Activated T-helper 2 cell treated with anti-CD3 and anti-CD28 coated beads, Interferon-gamma antibody, Interleukin-2, Interleukin-4, amounts not matched to agents 10 μg/mL and 5 μg/mL and 100 μg/mL, durations not matched to agents 14 hours and 24 hours and 36 hours (primary cell): ENCODE measurements at regions of chr10 and their contacts with region 1.

Region 1: DNA sequence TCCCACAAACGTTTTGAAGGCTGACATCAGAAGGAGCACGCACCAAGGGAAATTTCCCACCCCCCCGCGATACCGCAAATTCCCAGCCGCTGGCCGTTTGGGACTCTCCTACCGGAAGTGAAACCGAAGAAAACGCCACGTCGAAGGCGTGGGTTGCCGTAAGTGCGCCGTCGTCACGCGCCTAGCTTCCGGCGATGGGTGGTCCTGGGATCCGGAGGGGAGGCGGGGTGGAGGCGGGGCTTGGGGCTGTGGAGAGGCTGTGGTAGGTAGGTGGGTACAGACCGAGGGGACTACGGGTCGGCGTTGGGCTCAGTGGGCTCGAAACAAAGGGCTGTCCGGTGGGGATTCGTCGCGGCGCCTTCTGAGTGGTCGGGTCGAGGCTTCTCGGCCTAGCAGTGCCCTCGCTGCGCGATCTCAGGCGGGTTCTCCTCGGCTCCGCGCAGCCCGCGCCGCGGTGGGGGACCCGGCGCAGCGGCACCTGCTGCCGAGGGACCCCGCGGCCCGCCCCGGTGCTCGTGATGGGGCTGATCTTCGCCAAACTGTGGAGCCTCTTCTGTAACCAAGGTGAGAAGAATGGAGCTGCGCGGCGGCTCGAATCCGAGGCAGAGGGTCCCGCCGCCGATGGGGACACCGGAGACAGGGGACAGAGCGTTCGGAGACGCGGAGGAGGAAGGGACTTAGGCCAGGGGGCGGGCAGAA is at the start of gene ARL5B:
- DNase-seq: peak; percentile 92
- H3K4me3 Mint-ChIP-seq: peak within 1 kb of the TSS; percentile 94
- H3K27ac Mint-ChIP-seq: peak within 1 kb of the TSS; percentile 91
- H3K4me1 Mint-ChIP-seq: peaks cover 37% of the 10 kb centered on the region
- H3K27me3 Mint-ChIP-seq: no peaks in the 10 kb centered on the region
- total RNA-seq, gene ARL5B: 26.1 and 26.4 TPM in 2 replicates

Region 2: GRCh38 chr10:16817125-16818019 is 1841.9 kb before region 1 on chr10 and contains the start of gene RSU1:
- intact Hi-C with region 1: loop called (anchors 10 kb)
- DNase-seq: peak; percentile 100
- H3K4me3 Mint-ChIP-seq: peak within 1 kb of the TSS; percentile 93
- H3K27ac Mint-ChIP-seq: peak within 1 kb of the TSS; percentile 79
- H3K4me1 Mint-ChIP-seq: peaks cover 27% of the 10 kb centered on the region
- H3K27me3 Mint-ChIP-seq: peaks cover 10% of the 10 kb centered on the region
- total RNA-seq, gene RSU1: 49.1 and 54.0 TPM in 2 replicates

Region 3: DNA sequence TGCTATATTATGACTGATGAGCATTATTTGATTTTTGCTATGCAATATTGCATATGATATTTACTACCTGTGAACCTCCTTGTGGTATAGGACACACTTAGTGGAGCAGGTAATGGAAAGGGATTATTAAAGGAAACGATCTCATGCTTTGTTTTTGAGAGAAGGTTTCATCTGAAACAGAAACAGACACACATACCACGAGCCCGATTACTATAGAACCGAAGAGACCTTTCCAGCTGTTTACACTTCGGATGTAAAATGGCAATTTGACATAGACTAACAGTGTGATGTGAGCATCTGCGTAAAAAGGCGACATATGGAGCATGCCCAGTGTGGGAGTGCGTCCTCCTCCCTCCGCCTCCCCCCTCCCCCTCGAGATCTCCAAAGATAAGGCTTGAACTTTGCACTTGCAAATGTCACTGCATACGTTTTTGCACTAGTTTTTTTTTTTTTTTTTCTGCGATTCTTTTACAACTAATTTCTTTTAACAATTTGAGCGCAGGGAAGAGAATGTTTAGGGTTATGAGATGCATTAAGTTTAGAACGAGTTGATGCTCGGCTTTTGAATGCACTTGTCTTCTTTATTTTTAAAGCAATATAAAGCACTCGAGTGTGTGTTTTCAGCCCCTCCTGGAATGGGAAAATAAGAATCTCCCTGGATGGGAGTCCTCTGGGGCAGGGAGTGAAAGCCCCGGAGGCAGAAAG is 258.9 kb before region 1 on chr10:
- intact Hi-C with region 1: loop called (anchors 5 kb)
- DNase-seq: peak; percentile 18
- H3K4me3 Mint-ChIP-seq: peak overlapping the region; percentile 76
- H3K27ac Mint-ChIP-seq: peak overlapping the region; percentile 54
- H3K4me1 Mint-ChIP-seq: peaks cover 10% of the 10 kb centered on the region
- H3K27me3 Mint-ChIP-seq: peaks cover 25% of the 10 kb centered on the region

Region 4: DNA sequence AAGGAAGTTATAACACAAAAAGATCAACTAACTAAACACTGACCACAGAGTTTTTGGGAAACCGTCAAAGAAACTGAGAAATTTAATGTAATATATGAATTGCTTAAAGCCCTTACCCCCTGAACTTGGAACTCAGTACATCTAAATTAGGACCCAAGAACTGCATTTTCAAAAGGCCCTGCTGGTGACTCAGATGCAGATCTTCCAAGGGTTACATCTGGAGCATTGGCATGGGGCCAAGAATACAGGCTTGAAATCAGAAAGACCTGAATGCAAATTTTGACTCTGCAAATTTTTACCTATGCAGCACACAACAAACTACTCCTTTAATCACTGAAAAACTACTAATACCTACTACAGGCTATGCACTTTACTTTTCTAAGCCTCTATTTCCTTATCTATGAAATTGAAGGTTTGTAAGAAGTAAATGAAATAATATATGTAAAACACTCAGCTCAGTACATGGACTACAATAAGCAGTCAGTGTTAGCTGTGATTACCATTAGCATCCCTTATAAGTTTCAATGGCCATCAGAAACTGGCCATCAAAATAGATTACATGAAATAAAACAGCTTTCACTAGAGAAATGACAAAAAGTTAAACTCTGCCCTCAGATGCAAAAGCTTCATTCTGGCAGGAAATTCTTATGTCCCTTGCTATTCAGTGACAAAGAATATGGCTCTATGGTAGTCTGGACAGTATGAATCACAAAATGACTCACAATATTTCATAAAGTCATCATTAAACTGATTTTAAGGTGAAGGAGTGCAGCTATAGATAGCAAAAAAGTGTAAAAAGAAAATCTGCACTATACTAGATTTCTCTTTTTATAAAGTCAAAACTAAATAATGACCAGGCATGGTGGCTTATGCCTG is 51.5 kb before region 1 on chr10:
- intact Hi-C with region 1: loop called (anchors 2 kb)
- DNase-seq: no peak
- H3K4me3 Mint-ChIP-seq: no peak overlapping the region
- H3K27ac Mint-ChIP-seq: no peak overlapping the region
- H3K4me1 Mint-ChIP-seq: peaks cover 3% of the 10 kb centered on the region
- H3K27me3 Mint-ChIP-seq: no peaks in the 10 kb centered on the region

Region 5: DNA sequence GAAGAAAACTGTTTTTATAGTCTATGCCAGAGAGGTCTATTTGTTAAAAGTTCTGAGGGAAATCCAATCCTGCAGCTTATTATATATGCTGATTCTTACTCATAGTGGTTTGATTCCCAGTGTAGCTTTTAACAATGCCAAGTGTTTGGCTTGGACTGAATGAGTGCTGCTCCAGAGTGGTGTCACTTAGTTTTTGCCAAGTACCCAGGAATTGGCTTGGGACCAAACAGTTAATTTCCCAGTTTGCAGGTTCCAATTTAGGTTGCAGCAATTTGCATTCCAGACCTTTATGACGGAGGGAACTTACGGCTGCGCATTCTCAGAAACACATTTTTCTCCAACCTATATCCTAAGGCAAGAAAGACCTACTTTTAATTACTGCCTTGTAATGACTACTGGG is 40.3 kb before region 1 on chr10:
- intact Hi-C with region 1: loop called (anchors 5 kb)
- DNase-seq: no peak
- H3K4me3 Mint-ChIP-seq: no peak overlapping the region
- H3K27ac Mint-ChIP-seq: no peak overlapping the region
- H3K4me1 Mint-ChIP-seq: peaks cover 19% of the 10 kb centered on the region
- H3K27me3 Mint-ChIP-seq: no peaks in the 10 kb centered on the region

Region 6: DNA sequence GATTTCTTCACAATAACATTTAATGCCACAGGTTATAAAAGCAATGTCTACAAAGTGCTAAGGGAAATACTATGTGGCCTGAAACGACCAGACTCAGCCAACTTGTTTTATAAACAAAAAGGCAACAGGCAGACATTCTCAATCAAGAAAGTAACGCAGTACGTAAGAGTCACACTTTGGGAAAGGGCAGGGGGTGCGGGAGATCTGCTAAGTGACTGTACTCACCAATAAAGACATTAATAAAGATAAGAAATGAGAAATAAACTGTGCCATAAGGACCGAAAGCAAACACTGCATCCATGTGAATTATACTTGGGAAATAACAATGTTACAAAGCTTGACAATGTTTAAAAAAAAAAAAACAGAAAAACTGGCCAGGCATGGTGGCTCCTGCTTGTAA is 33.4 kb before region 1 on chr10:
- intact Hi-C with region 1: loop called (anchors 1 kb)
- DNase-seq: no peak
- H3K4me3 Mint-ChIP-seq: no peak overlapping the region
- H3K27ac Mint-ChIP-seq: no peak overlapping the region
- H3K4me1 Mint-ChIP-seq: peaks cover 16% of the 10 kb centered on the region
- H3K27me3 Mint-ChIP-seq: no peaks in the 10 kb centered on the region

Region 7: DNA sequence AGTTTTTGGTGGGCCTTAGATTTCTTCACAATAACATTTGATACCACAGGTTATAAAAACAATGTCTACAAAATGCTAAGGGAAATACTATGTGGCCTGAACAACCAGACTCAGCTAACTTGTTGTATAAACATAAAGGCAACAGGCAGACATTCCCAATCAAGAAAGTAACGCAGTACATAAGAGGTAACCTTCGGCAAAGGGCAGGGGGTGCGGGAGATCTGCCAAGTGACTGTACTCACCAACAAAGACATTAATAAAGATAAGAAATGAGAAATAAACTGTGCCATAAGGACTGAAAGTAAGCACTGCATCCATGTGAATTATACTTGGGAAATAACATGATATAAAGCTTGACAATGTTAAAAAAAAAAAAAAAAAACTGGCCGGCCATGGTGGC is 23.3 kb before region 1 on chr10:
- intact Hi-C with region 1: no loop called
- DNase-seq: no peak
- H3K4me3 Mint-ChIP-seq: no peak overlapping the region
- H3K27ac Mint-ChIP-seq: no peak overlapping the region
- H3K4me1 Mint-ChIP-seq: peaks cover 3% of the 10 kb centered on the region
- H3K27me3 Mint-ChIP-seq: no peaks in the 10 kb centered on the region